ENCODE measurements at regions of chr9 and their contacts with region 1.

Region 1: GRCh38 chr9:12719431-12719830 is 26.2 kb downstream of the TYRP1 start:
- DNase-seq: no peak
- H3K4me3 ChIP-seq: no peak overlapping the region
- H3K27me3 ChIP-seq: no peaks in the 10 kb centered on the region
- CTCF ChIP-seq: peak; percentile 53

Region 2: GRCh38 chr9:12667892-12668291 is 51.5 kb before region 1 on chr9:
- CTCF ChIA-PET with region 1: no interaction called
- POLR2A ChIA-PET with region 1: no interaction called
- DNase-seq: no peak
- H3K4me3 ChIP-seq: no peak overlapping the region
- H3K27me3 ChIP-seq: no peaks in the 10 kb centered on the region
- CTCF ChIP-seq: no peak

Region 3: DNA sequence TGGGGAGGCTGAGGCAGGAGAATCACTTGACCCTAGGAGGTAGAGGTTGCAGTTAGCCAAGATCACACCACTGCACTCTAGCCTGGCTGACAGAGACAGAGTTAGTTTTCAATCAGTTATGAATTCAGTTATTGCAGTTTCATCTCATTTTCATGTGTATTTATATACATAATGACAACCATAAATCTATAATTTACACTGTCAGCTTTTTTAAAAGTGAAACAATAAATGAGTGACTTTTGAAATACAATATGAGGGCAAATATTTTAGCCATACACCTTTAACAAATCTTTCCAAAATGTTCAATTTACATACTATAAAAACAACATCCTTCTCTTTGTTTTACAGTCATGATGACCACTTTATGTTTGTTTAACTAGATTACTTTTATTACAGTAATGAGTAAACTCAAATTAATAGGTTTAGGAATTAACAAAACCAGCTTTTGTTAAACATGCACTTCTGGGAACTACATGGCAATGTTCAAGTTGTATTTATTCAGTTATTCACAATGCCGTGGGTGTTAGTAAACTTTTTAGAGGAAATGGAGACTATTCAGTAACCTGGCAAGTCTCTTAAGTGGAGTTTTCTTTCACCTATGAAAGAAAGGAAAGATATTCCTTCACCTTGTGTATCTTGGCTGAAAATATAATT is 13.6 kb before region 1 on chr9:
- CTCF ChIA-PET with region 1: interaction called, 15 read pairs
- POLR2A ChIA-PET with region 1: no interaction called
- DNase-seq: no peak
- H3K4me3 ChIP-seq: no peak overlapping the region
- H3K27me3 ChIP-seq: no peaks in the 10 kb centered on the region
- CTCF ChIP-seq: no peak

Region 4: DNA sequence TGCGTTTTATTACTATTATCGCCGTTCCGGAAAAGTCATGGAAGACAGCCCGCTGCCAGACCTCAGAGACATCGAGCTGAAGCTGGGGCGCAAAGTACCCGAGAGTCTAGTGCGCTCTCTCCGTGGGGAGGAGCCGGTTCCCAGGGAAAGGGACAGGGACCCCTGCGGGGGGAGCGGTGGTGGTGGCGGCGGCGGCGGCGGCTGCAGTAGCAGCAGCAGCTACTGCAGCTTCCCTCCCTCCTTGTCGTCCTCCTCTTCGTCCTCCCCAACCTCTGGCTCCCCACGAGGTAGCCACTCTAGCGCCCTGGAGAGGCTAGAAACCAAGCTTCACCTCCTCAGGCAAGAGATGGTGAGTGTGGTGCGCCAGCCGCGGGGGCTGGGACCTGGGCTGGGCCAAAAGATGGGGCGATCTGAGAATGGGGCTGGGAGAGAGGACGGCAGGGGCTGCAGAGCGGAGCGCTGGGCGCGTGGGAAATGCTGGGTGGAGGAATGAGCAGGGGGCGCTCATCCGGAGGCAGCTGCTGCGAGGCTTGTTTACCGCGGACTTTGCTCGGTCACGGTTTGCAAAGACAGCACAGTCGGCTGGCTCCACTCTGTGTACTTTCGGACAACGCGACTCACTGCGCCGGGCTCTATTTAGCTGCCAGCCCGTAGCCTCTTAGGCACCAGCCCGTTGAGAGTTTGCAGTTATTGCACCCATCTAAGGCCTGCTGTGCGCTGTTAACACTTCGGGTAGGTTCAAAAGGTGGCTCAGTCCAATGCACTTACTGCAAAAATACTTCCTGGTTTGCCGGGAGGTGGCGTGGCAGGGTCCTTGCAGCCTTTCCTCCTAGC is 56.5 kb after region 1 on chr9:
- CTCF ChIA-PET with region 1: interaction called, 31 read pairs
- POLR2A ChIA-PET with region 1: no interaction called
- DNase-seq: no peak
- H3K4me3 ChIP-seq: peak overlapping the region; percentile 60
- H3K27me3 ChIP-seq: no peaks in the 10 kb centered on the region
- CTCF ChIP-seq: peak; percentile 57

Region 5: DNA sequence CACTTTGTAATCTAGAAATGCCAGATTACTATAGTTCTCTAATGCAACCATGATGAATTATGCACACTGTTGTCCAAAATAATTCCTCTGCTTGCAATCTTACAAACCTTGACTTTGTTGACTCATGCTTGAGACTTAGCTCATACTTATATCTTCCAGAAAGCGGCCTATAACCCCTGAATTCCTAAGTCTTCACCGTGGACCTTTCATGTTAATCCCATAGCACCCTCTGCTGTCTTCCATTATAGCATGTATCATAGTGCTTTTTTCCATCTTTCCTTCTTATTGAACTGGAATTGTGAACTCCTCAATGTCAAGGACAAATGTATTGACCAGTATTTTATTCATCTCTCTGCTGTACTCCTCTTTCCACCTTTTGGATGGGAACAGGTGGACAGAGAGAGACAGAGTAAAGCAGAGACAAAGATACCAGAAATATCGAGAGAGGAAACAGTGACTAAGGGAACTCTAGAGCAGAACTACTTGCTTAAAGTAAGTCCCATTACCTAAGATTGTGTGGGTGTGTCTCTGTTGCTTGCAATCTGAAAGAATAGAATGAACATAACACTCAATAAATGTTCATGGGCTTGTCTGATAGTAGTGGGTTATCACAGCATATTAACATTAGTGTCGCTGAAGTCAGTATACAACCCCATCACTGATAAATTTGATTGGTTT is 165.4 kb after region 1 on chr9:
- CTCF ChIA-PET with region 1: interaction called, 29 read pairs
- POLR2A ChIA-PET with region 1: interaction called, 5 read pairs
- DNase-seq: peak; percentile 12
- H3K4me3 ChIP-seq: no peak overlapping the region
- H3K27me3 ChIP-seq: no peaks in the 10 kb centered on the region
- CTCF ChIP-seq: peak; percentile 62